CD8-positive, alpha-beta T cell (primary cell): ENCODE measurements at regions of chr1 and their contacts with region 1.

Region 1: GRCh38 chr1:160877221-160877620 is 7.8 kb downstream of the ITLN1 start:
- DNase-seq: peak in 3 of 9 experiments; percentile 21 to 78 (median 67)
- ATAC-seq: peak; percentile 86
- H3K4me3 ChIP-seq: no peak overlapping the region
- H3K4me3 Mint-ChIP-seq: no peak overlapping the region
- H3K27ac ChIP-seq: no peak overlapping the region
- H3K27ac Mint-ChIP-seq: peak overlapping the region; percentile 0
- H3K4me1 ChIP-seq: peaks cover 11% of the 10 kb centered on the region
- H3K4me1 Mint-ChIP-seq: peaks cover 27% of the 10 kb centered on the region
- H3K27me3 ChIP-seq: no peaks in the 10 kb centered on the region
- H3K27me3 Mint-ChIP-seq: no peaks in the 10 kb centered on the region
- CTCF ChIP-seq: peak; percentile 62

Region 2: DNA sequence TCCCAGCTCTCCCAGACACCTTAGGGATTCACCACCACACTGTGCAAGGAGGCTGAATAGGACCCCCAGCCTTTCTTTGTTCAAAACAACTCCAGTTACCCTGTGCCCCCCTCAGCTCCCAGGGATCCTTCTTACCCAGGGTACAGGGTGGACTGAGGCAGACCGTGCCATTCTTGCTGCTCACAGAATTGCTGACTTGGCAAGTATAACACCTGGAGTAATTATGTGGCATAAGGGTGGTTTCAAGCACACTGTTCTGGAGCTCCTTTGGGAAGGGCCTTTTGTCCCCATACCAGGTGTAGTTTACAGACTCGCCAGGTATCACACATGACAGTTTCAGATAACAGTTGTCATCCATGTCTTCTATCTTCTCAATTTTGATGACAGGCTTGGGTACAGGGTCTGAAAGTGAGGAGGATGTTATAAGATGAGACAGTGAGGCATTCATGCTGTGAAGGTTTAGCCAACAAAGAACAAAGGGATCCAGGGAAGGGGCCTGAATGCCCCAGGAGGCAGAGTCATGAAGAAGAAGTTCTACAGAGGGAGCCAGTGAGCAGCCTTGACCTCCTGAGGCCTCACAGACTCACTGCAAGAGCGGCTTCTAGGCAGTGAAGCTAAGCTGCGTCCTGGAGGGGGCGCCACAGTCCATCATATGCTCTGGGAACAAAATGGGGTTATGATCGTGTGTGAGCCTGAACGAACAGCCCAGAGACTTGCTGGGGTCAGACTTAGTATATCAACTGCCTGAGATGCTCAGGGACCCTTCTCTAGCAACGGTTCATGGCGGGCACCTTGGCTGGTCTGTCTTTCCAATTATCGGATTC is 195.9 kb before region 1 on chr1:
- CTCF ChIA-PET with region 1: interaction called, 7 read pairs
- POLR2A ChIA-PET with region 1: no interaction called
- intact Hi-C with region 1: loop called (anchors 2 kb)
- DNase-seq: peak; percentile 75 to 93 (median 91)
- ATAC-seq: peak; percentile 91
- H3K4me3 ChIP-seq: no peak overlapping the region
- H3K4me3 Mint-ChIP-seq: no peak overlapping the region
- H3K27ac ChIP-seq: peak overlapping the region; percentile 1 to 71
- H3K27ac Mint-ChIP-seq: peak overlapping the region; percentile 85
- H3K4me1 ChIP-seq: peaks cover 52% of the 10 kb centered on the region
- H3K4me1 Mint-ChIP-seq: peaks cover 54% of the 10 kb centered on the region
- H3K27me3 ChIP-seq: no peaks in the 10 kb centered on the region
- H3K27me3 Mint-ChIP-seq: no peaks in the 10 kb centered on the region
- CTCF ChIP-seq: peak; percentile 82

Region 3: GRCh38 chr1:160777486-160778089 is 99.6 kb before region 1 on chr1:
- CTCF ChIA-PET with region 1: interaction called, 43 read pairs
- POLR2A ChIA-PET with region 1: interaction called, 3 read pairs
- intact Hi-C with region 1: loop called (anchors 1 to 2 kb)
- DNase-seq: peak in 7 of 9 experiments; percentile 33 to 79 (median 52)
- ATAC-seq: peak; percentile 84
- H3K4me3 ChIP-seq: no peak overlapping the region
- H3K4me3 Mint-ChIP-seq: no peak overlapping the region
- H3K27ac ChIP-seq: no peak overlapping the region
- H3K27ac Mint-ChIP-seq: no peak overlapping the region
- H3K4me1 ChIP-seq: no peaks in the 10 kb centered on the region
- H3K4me1 Mint-ChIP-seq: peaks cover 20% of the 10 kb centered on the region
- H3K27me3 ChIP-seq: no peaks in the 10 kb centered on the region
- H3K27me3 Mint-ChIP-seq: no peaks in the 10 kb centered on the region
- CTCF ChIP-seq: peak; percentile 77

Region 4: GRCh38 chr1:160795951-160796383 is 81.3 kb before region 1 on chr1 and contains the start of gene LY9:
- CTCF ChIA-PET with region 1: interaction called, 12 read pairs
- POLR2A ChIA-PET with region 1: interaction called, 3 read pairs
- intact Hi-C with region 1: no loop called
- DNase-seq: peak; percentile 65 to 97 (median 77)
- ATAC-seq: peak; percentile 90
- H3K4me3 ChIP-seq: peak within 1 kb of the TSS; percentile 71 to 74
- H3K4me3 Mint-ChIP-seq: peak within 1 kb of the TSS; percentile 97
- H3K27ac ChIP-seq: peak within 1 kb of the TSS; percentile 75 to 85
- H3K27ac Mint-ChIP-seq: peak within 1 kb of the TSS; percentile 99
- H3K4me1 ChIP-seq: peaks cover 30% of the 10 kb centered on the region
- H3K4me1 Mint-ChIP-seq: peaks cover 54% of the 10 kb centered on the region
- H3K27me3 ChIP-seq: no peaks in the 10 kb centered on the region
- H3K27me3 Mint-ChIP-seq: no peaks in the 10 kb centered on the region
- CTCF ChIP-seq: no peak
- total RNA-seq, gene LY9: 103 to 104 TPM

Region 5: DNA sequence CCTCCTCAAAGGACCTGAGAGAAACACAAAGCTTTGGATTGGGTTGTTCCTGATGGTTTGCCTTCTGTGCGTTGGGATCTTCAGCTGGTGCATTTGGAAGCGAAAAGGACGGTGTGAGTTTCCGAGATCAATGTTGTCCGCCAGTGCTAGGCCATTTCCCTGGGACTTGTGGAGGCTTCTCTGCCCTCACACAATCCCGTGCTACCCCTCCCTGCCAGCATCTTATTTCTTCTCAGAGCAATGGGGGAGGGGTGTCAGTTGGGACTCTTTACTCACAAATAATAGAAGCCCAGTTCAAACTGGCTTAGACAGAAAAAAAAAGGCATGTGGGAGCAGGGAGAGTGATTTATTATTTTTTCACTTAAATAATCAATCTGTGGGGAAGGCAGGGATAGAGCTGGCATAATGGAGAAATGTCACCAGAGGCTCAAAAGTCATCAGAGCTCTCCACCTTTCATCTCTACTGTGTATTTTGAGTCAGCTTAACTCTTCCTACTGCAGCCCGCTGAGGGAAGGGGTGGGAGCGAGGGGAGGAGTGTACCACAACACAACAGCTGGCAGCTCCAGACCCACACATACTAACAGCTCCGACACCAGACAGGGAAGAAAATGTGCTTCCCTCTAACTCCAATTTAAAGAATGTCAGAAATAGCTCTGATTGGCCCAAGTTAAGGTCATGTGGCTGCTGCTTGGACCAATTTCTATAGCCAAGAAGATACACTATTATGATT is 58.8 kb before region 1 on chr1:
- CTCF ChIA-PET with region 1: interaction called, 10 read pairs
- POLR2A ChIA-PET with region 1: no interaction called
- intact Hi-C with region 1: no loop called
- DNase-seq: no peak
- ATAC-seq: no peak
- H3K4me3 ChIP-seq: no peak overlapping the region
- H3K4me3 Mint-ChIP-seq: no peak overlapping the region
- H3K27ac ChIP-seq: no peak overlapping the region
- H3K27ac Mint-ChIP-seq: peak overlapping the region; percentile 62
- H3K4me1 ChIP-seq: no peaks in the 10 kb centered on the region
- H3K4me1 Mint-ChIP-seq: peaks cover 13% of the 10 kb centered on the region
- H3K27me3 ChIP-seq: no peaks in the 10 kb centered on the region
- H3K27me3 Mint-ChIP-seq: no peaks in the 10 kb centered on the region
- CTCF ChIP-seq: no peak

Region 6: DNA sequence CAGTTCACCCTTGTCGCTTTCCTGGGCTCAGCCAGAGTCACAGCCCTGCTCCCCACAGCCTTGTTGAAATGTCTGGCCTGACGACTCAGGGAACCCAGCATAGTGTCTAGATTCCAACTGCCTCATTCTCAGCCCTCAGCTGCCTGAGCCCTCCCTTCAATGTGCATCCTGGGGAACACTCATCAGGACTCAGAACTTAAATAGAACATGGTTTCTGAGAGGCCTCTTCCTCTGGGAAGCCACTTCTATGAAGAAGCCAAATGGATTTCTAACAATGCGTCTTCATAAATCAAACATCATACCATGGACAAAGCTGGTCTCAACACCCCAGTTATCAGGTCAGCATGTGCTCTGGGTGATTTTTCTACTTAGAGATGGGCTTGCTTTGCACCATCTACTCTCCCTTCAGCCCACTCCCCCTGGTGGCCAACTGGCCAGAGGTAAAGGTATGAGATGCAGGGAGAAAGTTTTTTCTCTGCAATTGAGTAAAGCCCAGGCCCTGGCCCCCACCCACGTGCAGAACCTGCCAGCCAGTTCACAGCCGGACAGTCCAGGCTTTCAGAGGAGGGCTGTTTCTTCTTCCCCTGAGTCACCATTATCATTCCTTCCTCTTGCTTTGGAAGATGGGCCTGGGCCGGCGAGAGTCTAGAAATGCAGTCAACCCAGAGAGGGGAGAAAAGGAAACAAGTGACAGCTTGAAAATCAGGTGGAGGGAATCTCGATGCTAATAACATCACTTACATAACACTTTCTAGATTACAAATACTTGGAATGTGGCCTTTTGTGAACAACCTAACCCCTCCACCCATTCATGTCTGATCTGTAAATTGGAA is 46.7 kb before region 1 on chr1:
- CTCF ChIA-PET with region 1: interaction called, 224 read pairs
- POLR2A ChIA-PET with region 1: interaction called, 5 read pairs
- intact Hi-C with region 1: no loop called
- DNase-seq: peak; percentile 52 to 87 (median 80)
- ATAC-seq: peak; percentile 70
- H3K4me3 ChIP-seq: no peak overlapping the region
- H3K4me3 Mint-ChIP-seq: no peak overlapping the region
- H3K27ac ChIP-seq: peak overlapping the region in 1 of 2 experiments; percentile 15
- H3K27ac Mint-ChIP-seq: peak overlapping the region; percentile 86
- H3K4me1 ChIP-seq: peaks cover 25% of the 10 kb centered on the region
- H3K4me1 Mint-ChIP-seq: peaks cover 58% of the 10 kb centered on the region
- H3K27me3 ChIP-seq: no peaks in the 10 kb centered on the region
- H3K27me3 Mint-ChIP-seq: no peaks in the 10 kb centered on the region
- CTCF ChIP-seq: peak; percentile 73

Region 7: DNA sequence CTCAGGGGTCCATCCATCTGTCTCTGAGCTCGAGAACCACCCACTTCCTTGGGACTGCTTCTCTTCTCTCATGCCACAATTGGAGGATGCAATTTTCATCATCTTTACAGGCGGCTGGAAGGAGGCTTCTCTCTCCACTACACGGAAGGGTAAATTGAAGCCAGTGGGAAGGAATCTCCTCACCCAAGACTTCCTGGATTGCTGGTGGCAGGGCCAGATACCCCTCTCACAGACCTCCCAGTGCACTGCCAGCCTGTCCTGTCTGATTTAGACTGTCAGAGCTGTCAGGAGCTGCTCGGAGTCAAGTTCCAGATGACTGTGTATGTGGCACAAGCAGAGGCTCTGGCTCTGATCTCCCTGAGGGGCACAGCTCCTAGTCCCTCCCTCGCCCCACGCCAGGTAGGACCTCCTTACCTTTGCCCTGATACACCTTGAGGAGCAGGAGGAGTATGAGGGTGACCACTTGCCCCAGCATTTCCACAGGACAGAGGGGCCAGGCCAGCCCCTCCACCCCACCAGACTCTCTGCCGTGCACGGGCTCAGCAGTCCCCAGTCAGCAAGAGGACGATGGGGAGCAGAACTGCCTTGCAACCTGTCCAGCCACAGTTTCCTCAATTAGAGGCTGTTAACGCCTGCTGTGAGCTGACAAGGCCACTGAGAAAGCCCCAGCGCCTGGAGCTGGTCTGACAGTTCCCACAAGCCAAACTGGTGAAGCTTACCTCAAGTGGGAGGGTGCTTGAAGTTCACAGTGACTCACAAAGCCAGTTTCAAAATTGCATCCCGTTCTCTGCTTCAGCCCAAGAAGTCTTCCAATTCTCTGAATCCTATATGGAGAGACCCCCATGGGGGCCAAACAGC is 14.8 kb before region 1 on chr1 and contains the start of gene CD244:
- CTCF ChIA-PET with region 1: interaction called, 52 read pairs
- POLR2A ChIA-PET with region 1: interaction called, 3 read pairs
- intact Hi-C with region 1: no loop called
- DNase-seq: peak; percentile 25 to 89 (median 50)
- ATAC-seq: peak; percentile 88
- H3K4me3 ChIP-seq: peak within 1 kb of the TSS; percentile 14 to 68
- H3K4me3 Mint-ChIP-seq: peak within 1 kb of the TSS; percentile 79
- H3K27ac ChIP-seq: peak within 1 kb of the TSS; percentile 11 to 73
- H3K27ac Mint-ChIP-seq: peak within 1 kb of the TSS; percentile 88
- H3K4me1 ChIP-seq: peaks cover 20% of the 10 kb centered on the region
- H3K4me1 Mint-ChIP-seq: peaks cover 40% of the 10 kb centered on the region
- H3K27me3 ChIP-seq: no peaks in the 10 kb centered on the region
- H3K27me3 Mint-ChIP-seq: no peaks in the 10 kb centered on the region
- CTCF ChIP-seq: no peak
- total RNA-seq, gene CD244: 2.1 to 2.6 TPM

Region 8: GRCh38 chr1:161549652-161550051 is 672.4 kb after region 1 on chr1 and contains the start of gene FCGR3A:
- CTCF ChIA-PET with region 1: no interaction called
- POLR2A ChIA-PET with region 1: no interaction called
- intact Hi-C with region 1: no loop called
- DNase-seq: peak in 1 of 9 experiments; percentile 53
- ATAC-seq: no peak
- H3K4me3 ChIP-seq: peak within 1 kb of the TSS in 1 of 2 experiments; percentile 48
- H3K4me3 Mint-ChIP-seq: peak within 1 kb of the TSS; percentile 15
- H3K27ac ChIP-seq: peak within 1 kb of the TSS in 1 of 2 experiments; percentile 85
- H3K27ac Mint-ChIP-seq: peak within 1 kb of the TSS; percentile 41
- H3K4me1 ChIP-seq: peaks cover 9% of the 10 kb centered on the region
- H3K4me1 Mint-ChIP-seq: peaks cover 20% of the 10 kb centered on the region
- H3K27me3 ChIP-seq: no peaks in the 10 kb centered on the region
- H3K27me3 Mint-ChIP-seq: no peaks in the 10 kb centered on the region
- CTCF ChIP-seq: no peak
- total RNA-seq, gene FCGR3A: 0.98 to 1.00 TPM